PC-3 (cell line): ENCODE measurements at regions of chr20 and their contacts with region 1.

Region 1: DNA sequence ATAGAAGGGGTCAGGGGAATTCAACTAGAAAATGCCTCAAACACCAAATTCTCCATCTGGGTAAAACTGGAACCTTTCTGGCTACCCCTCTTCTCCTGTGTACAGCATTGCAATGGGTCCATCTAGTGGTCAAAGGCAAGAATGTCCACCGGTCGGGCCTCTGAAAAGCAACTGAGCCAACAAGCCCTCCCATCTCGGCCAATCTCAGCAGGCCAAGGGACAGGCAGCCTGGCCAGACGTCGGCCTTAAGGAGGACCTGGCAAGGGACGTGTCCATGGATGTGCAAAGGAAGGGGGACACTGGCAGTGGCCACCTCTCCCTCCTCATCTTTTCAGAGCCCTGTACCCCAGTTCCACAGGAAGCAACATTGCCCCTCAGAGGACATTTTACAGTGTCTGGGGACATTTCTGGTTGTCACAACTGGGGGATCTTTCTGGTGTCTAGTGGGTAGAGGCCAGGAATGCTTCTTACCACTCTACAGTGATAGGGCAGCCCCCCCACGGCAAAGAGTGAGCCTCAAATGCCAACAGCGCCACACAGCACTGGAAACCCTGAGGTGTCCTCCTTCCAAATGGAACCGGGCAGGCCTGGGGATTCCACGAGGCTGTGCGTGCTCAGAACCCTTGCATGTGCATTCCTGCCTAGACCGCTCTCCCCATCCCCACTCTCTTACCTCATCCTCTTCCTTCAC is 99.8 kb upstream of the FOXA2 start:
- DNase-seq: peak; percentile 90
- ATAC-seq: peak; percentile 76
- H3K4me3 ChIP-seq: no peak overlapping the region
- H3K27ac ChIP-seq: no peak overlapping the region
- H3K4me1 ChIP-seq: peaks cover 9% of the 10 kb centered on the region; the same call in 1 of the 2 replicates
- H3K27me3 ChIP-seq: peaks cover under 1% of the 10 kb centered on the region; the same call in 1 of the 2 replicates
- CTCF ChIP-seq: peak; percentile 95

Region 2: DNA sequence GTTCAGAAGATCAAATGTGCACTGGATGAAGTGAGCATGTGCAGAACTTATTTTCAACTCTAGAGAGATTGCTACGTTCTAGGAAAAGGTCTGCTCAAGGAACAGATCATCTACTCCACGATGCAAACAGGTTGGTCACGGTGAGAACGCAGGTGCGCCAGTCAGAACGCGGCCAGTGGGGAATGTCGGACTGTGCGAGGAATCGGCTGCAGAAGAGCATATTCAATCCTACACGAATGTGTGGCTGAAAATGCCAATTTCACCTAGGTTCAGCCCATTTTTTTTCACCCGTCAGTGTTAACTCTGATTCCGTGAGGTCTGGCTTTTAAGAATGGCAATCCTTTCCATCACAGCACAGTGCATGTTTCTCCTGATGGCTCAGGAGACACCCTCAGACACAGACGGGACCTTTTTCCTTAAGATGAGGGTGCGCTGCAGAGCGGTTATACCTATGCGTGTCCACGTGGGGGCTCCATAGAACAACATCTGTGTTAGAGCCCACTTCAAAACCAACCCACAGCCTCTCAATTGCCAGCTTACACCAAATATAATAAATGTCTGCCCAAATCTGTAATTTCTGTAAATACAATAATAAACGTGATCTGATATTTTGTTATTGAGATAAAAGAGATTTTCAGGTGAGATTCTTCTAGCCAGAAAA is 350.2 kb before region 1 on chr20:
- CTCF ChIA-PET with region 1: interaction called, 10 read pairs
- POLR2A ChIA-PET with region 1: no interaction called
- intact Hi-C with region 1: loop called (anchors 1 kb)
- DNase-seq: peak; percentile 84
- ATAC-seq: peak; percentile 91
- H3K4me3 ChIP-seq: no peak overlapping the region
- H3K27ac ChIP-seq: no peak overlapping the region
- H3K4me1 ChIP-seq: no peaks in the 10 kb centered on the region
- H3K27me3 ChIP-seq: peaks cover 51% of the 10 kb centered on the region
- CTCF ChIP-seq: peak; percentile 94

Region 3: DNA sequence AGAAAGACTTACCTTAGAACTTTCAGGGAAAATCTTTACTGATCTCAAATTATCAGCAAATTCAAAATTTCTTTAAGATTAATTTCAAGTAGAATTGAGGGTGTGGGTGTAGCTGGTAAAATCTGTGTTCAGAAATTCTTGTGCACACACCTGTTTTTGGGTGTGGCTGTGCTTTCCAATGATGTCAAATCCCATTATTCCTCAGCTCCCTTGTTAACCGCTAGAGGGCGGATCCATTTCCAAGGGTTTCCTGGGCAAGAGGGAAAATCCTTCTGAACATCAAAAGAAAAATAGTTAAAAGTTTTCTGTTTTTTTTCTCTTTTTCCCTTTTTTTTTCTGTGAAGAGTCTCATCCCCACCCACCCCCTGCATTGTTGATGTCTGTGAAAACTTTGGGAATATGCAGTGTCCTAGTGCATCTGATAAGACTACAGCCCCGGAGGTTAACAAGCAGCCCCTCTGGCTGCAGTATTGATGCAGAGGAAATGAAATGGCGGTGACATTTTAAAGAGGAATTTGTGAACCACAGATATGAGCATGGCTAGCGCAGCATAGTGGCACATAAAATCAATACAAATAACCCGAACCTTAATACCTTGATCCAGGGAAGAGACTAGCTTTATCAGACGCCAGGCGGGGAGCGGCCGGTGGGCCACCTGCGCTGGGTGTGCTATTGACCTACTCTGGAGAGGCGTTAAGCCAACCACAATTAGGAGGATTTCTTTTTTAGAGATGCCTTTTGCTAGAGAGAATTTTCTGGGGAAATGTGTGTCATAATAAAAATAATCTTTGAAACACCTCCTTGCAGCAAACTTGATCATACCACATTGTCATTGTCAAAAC is 230.8 kb before region 1 on chr20:
- CTCF ChIA-PET with region 1: no interaction called
- POLR2A ChIA-PET with region 1: no interaction called
- intact Hi-C with region 1: loop called (anchors 2 kb)
- DNase-seq: peak; percentile 78
- ATAC-seq: peak; percentile 39; the same call in 1 of the 2 replicates
- H3K4me3 ChIP-seq: no peak overlapping the region
- H3K27ac ChIP-seq: no peak overlapping the region
- H3K4me1 ChIP-seq: peaks cover 8% of the 10 kb centered on the region; the same call in 1 of the 2 replicates
- H3K27me3 ChIP-seq: no peaks in the 10 kb centered on the region
- CTCF ChIP-seq: peak; percentile 94

Region 4: DNA sequence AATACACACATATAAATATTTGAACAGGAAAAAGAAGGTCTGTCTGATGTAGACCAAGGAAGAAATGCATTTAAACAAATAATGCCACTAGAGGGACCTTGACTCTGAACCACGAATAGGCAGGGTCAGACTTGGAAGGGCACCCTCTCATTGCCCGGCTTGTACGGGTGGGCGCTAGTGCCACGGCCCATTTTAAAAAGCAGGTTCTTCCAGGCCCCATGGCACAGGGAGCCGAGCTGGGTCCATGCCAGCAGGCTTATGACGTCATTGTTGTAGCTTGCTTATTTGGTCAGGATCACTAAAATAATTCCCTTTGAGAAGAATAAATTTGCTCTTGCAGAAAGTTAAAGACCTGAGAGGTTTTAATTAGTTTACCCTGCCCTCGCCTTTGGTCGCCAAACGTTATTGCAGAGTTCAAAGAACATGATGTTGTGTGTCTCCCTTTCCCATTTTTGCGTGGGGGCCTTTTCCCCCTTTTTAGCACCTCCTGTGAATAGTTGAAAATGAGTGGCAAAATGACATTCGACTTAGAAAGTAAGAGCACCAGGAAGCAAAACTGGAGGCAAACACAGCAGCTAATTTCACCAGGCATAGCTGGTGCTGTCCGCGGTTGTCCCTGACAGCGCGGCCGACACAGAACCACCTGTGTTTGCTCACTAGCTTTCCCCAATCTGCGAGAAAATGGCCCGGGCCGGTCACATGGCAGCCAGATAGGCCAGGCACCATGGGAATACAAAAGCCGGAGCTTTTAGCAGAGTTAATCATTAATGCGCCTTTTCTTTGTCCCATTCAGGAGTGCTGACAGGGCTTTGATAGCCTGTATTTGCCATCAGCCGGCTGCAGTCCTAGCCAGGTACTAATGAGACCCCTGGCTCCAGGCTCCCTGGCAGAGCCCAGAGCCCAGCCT is 193.7 kb before region 1 on chr20:
- CTCF ChIA-PET with region 1: no interaction called
- POLR2A ChIA-PET with region 1: no interaction called
- intact Hi-C with region 1: loop called (anchors 1 kb)
- DNase-seq: peak; percentile 61
- ATAC-seq: peak; percentile 89
- H3K4me3 ChIP-seq: no peak overlapping the region
- H3K27ac ChIP-seq: no peak overlapping the region
- H3K4me1 ChIP-seq: peaks cover 10% of the 10 kb centered on the region; the same call in 1 of the 2 replicates
- H3K27me3 ChIP-seq: no peaks in the 10 kb centered on the region
- CTCF ChIP-seq: peak; percentile 71

Region 5: DNA sequence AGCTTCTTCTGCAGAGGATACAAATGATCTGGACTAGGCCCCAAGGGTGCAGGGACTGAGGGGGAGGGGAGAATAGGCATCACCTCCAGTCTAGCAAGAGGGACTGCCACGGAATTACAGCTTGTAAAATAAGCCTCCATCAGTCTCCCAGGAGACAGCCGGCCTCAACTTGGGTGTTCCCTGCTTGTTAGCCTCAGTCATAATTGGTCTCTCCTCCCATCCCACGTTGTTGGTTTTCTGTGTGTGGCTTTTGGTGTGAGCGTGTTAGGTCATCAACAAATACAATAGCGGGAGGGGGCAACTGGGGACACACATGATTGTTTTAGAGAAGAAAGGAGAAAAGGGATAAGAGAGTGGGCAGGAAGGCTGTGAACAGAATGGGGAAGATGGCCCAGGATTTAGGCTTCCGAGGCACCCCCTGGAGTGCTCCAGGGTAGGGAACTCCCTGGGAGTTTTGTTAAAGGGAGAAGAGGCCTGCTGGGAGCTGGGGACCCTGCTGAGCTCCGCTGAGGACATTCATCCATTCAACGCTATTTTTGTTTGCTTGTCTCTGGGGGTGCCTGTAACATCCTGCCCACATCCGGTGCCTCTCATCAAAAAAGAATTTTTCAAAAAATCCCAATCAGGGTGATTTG is 109.0 kb before region 1 on chr20:
- CTCF ChIA-PET with region 1: interaction called, 11 read pairs
- POLR2A ChIA-PET with region 1: no interaction called
- intact Hi-C with region 1: no loop called
- DNase-seq: peak; percentile 59
- ATAC-seq: peak; percentile 32
- H3K4me3 ChIP-seq: no peak overlapping the region; the same call in 1 of the 2 replicates
- H3K27ac ChIP-seq: peak overlapping the region; percentile 80
- H3K4me1 ChIP-seq: peaks cover 21% of the 10 kb centered on the region
- H3K27me3 ChIP-seq: 0 out of 2 replicates have a peak, but pooled peaks cover 6% of the 10 kb centered on the region
- CTCF ChIP-seq: no peak